T-cell (primary cell): ENCODE measurements at regions of chr1 and their contacts with region 1.

Region 1: GRCh38 chr1:186063091-186063657 is 311.9 kb downstream of the TPR start:
- DNase-seq: no peak
- ATAC-seq: no peak
- H3K4me3 ChIP-seq: no peak overlapping the region
- H3K4me3 Mint-ChIP-seq: no peak overlapping the region
- H3K27ac ChIP-seq: no peak overlapping the region
- H3K27ac Mint-ChIP-seq: no peak overlapping the region
- H3K4me1 ChIP-seq: no peaks in the 10 kb centered on the region
- H3K4me1 Mint-ChIP-seq: peaks cover 0 to 2% (median 0%) of the 10 kb centered on the region in 3 donors
- H3K27me3 ChIP-seq: no peaks in the 10 kb centered on the region
- H3K27me3 Mint-ChIP-seq: peaks cover 0 to 6% of the 10 kb centered on the region in 2 donors

Region 2: GRCh38 chr1:185450060-185450788 is 613.0 kb before region 1 on chr1:
- CTCF ChIA-PET with region 1: no interaction called
- POLR2A ChIA-PET with region 1: interaction called in 1 of 2 experiments, 17 read pairs
- DNase-seq: no peak
- ATAC-seq: no peak
- H3K4me3 ChIP-seq: no peak overlapping the region
- H3K4me3 Mint-ChIP-seq: no peak overlapping the region
- H3K27ac ChIP-seq: no peak overlapping the region
- H3K27ac Mint-ChIP-seq: no peak overlapping the region
- H3K4me1 ChIP-seq: no peaks in the 10 kb centered on the region
- H3K4me1 Mint-ChIP-seq: peaks cover 0 to 4% (median 1%) of the 10 kb centered on the region in 3 donors
- H3K27me3 ChIP-seq: no peaks in the 10 kb centered on the region
- H3K27me3 Mint-ChIP-seq: no peaks in the 10 kb centered on the region

Region 3: GRCh38 chr1:187143783-187144182 is 1080.6 kb after region 1 on chr1:
- CTCF ChIA-PET with region 1: no interaction called
- POLR2A ChIA-PET with region 1: no interaction called
- DNase-seq: no peak
- ATAC-seq: no peak
- H3K4me3 ChIP-seq: no peak overlapping the region
- H3K4me3 Mint-ChIP-seq: no peak overlapping the region
- H3K27ac ChIP-seq: no peak overlapping the region
- H3K27ac Mint-ChIP-seq: no peak overlapping the region
- H3K4me1 ChIP-seq: no peaks in the 10 kb centered on the region
- H3K4me1 Mint-ChIP-seq: peaks cover 0 to 6% (median 2%) of the 10 kb centered on the region in 3 donors
- H3K27me3 ChIP-seq: no peaks in the 10 kb centered on the region
- H3K27me3 Mint-ChIP-seq: no peaks in the 10 kb centered on the region